Activated CD4-positive, alpha-beta memory T cell treated with anti-CD3 and anti-CD28 coated beads for 36 hours (primary cell): ENCODE measurements at regions of chr15 and their contacts with region 1.

Region 1: DNA sequence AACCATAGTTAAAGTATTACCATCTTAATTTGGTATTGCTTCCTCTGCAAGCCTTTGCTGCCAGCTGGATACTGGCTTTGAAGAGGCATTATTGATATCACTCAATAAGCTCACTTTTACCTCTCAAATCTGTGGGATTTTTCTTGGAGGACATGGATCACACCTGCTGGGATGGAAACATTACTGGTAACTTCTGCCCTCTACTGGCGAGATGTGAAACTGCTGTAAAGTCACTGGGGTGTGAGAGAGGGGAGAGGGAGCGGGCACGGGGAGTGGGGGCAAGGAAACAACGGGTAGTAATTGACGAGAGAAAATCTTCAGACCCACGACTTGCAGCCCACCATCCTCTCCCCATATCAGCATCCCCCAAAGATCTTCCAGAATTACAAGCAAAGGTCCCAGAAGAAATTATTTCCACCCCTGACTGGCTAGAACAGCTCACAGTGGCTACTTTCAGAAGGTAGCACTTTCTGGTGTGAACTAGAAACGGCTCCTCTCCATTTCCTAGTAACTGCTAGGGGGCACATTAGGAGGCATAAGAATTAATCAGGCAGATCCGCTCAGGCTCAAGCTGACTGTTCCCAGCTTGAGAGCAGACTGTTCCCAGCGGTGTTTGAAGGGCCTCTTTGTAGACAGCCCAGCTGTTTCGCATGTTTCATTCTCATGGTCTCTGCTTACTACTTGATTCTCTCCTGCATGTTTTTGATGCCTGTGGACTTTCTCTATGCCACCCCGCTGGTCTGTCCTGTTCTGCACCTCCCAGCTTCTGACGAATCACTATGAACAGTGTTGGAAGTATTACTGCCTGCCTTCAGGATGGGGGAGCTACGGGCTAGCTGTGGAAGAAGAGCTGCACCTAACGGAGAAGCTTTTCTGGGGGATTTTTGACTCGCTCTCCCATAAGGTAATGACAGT is 230.4 kb upstream of the CHRM5 start:
- DNase-seq: peak; percentile 20
- H3K4me3 Mint-ChIP-seq: no peak overlapping the region
- H3K27ac Mint-ChIP-seq: no peak overlapping the region
- H3K4me1 Mint-ChIP-seq: no peaks in the 10 kb centered on the region
- H3K27me3 Mint-ChIP-seq: peaks cover 4% of the 10 kb centered on the region

Region 2: DNA sequence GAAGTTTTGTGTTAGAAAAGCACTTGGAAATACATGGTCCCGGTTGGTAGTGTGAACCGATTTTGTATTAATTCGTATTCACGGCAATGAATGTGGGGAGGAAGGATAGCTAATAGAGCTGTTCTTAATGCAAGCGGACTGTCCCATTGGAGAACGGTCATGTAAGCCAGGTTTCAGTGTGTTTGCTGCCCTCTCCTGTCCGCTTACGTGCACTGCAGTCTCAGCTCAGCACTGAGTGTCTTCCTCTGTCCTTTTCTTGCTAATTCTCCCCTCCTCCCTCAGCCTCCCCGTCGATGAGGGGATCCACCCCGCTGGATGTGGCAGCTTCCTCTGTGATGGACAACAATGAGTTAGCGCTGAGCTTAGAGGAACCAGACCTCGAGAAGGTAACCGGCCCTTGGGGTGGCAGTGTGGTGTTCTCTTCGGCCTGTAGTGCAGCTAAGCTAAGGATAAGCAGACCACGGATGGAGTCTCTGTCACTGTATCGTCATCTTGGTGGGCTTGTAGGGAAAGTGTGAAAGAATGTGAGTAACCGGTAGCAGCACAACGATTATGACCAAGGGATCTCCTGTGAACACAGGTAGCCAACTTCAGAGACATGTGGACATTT is 37.1 kb before region 1 on chr15:
- CTCF ChIA-PET with region 1: interaction called, 40 read pairs
- POLR2A ChIA-PET with region 1: no interaction called
- intact Hi-C with region 1: no loop called
- DNase-seq: peak; percentile 71
- H3K4me3 Mint-ChIP-seq: no peak overlapping the region
- H3K27ac Mint-ChIP-seq: no peak overlapping the region
- H3K4me1 Mint-ChIP-seq: no peaks in the 10 kb centered on the region
- H3K27me3 Mint-ChIP-seq: peaks cover 12% of the 10 kb centered on the region

Region 3: GRCh38 chr15:33722005-33722672 is 15.8 kb before region 1 on chr15:
- CTCF ChIA-PET with region 1: interaction called, 19 read pairs
- POLR2A ChIA-PET with region 1: no interaction called
- intact Hi-C with region 1: no loop called
- DNase-seq: no peak
- H3K4me3 Mint-ChIP-seq: no peak overlapping the region
- H3K27ac Mint-ChIP-seq: no peak overlapping the region
- H3K4me1 Mint-ChIP-seq: no peaks in the 10 kb centered on the region
- H3K27me3 Mint-ChIP-seq: peaks cover 6% of the 10 kb centered on the region

Region 4: DNA sequence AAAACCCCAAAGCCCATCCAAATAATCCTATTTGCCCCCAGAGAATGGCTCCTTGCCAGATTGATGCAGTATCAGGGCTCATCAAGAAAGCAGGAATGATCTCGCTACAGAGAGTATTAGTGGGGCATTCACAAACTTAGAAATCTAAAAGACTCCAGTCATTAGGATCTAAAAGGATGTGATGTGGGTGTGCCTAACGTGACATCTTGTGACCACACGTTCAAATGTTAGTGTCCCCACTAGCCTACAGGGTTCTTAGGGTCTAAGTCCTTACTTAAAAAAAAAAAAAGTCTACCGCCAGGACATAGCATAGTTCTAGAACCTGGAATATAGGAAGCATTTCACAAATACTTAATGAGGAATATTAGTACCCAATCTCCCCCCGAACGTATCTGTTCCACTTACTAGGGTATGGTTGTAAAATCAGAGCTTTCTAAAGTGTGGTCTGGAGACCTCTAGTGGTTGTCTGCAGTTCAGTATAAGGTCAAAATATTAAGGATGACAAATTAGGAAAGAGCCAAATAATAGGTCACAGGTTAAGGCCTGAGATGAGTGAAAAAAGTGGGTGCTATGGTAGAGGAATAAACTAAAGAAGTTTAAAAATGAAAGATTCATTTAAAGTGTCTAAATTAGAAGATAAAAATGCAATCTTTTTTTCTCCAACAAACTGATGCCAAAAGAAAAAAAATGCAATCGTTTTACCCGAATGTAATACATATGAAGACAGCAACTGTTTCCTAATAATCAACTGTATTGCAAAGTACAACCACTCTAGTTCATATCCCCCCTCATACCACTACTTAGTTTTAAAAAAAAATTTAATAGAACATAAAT is 226.1 kb after region 1 on chr15:
- CTCF ChIA-PET with region 1: interaction called, 8 read pairs
- POLR2A ChIA-PET with region 1: no interaction called
- intact Hi-C with region 1: loop called (anchors 1 kb)
- DNase-seq: no peak
- H3K4me3 Mint-ChIP-seq: no peak overlapping the region
- H3K27ac Mint-ChIP-seq: no peak overlapping the region
- H3K4me1 Mint-ChIP-seq: no peaks in the 10 kb centered on the region
- H3K27me3 Mint-ChIP-seq: no peaks in the 10 kb centered on the region

Region 5: GRCh38 chr15:33994005-33994615 is 256.2 kb after region 1 on chr15:
- CTCF ChIA-PET with region 1: interaction called, 3 read pairs
- POLR2A ChIA-PET with region 1: no interaction called
- intact Hi-C with region 1: loop called (anchors 1 kb)
- DNase-seq: peak; percentile 15
- H3K4me3 Mint-ChIP-seq: no peak overlapping the region
- H3K27ac Mint-ChIP-seq: no peak overlapping the region
- H3K4me1 Mint-ChIP-seq: no peaks in the 10 kb centered on the region
- H3K27me3 Mint-ChIP-seq: no peaks in the 10 kb centered on the region